ENCODE measurements at regions of chr5 and their contacts with region 1.

Region 1: DNA sequence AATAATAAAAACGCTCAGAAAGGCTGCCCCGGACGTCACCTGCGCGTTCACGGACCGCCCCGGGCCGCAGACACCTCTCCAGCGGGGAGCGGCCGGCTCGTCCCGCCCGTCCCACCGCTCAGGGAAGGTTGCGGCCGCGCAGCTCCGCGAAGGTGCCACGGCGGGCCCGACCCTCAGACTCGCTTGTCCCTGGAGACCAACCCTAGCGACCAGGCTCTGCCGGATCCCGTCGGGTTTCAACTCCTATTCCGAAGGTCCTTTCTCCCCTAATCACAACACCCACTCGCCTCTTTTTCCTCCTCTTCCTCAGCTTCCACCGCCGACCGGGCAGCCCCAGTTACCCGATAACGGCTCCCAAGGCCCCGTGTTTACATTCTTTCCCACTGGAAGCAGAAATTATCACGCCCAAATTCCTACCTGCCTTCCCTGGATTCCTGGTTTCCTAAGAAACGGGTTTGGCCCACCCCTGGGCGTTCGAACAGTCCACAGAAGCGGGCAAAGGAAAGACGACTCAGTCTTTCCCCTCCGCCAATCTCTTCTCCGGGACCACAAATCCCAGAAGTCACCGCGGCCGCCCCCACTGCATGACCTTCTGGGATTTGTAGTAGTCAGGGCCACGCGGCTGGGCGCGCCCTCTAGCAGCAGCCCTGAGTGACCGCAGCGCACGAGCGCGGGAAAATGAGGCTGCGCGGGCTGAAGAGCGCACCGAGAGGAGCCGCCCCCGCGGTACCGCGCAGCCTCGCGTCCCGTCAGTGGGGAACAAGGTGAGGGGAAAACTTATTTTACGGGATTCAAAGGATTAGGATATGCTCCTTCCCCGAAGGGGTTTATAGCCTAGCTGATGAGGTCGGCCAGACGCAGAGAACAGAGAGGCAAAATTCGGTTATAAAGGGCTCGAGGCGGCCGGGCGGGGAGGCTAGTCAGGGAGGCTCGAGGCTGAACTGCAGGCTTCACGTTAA is at the start of gene TTC33:
- DNase-seq: peak; percentile 93
- H3K4me3 Mint-ChIP-seq: peak within 1 kb of the TSS; percentile 41
- H3K27ac Mint-ChIP-seq: no peak within 1 kb of the TSS
- H3K4me1 Mint-ChIP-seq: peaks cover 5% of the 10 kb centered on the region
- H3K27me3 Mint-ChIP-seq: no peaks in the 10 kb centered on the region
- total RNA-seq, gene TTC33: 29.0 and 29.3 TPM in 2 replicates

Region 2: GRCh38 chr5:39074016-39074886 is 1681.4 kb before region 1 on chr5 and contains the start of gene RICTOR:
- intact Hi-C with region 1: loop called (anchors 10 kb)
- DNase-seq: peak; percentile 87
- H3K4me3 Mint-ChIP-seq: peak within 1 kb of the TSS; percentile 95
- H3K27ac Mint-ChIP-seq: peak within 1 kb of the TSS; percentile 97
- H3K4me1 Mint-ChIP-seq: peaks cover 46% of the 10 kb centered on the region
- H3K27me3 Mint-ChIP-seq: peaks cover 12% of the 10 kb centered on the region
- total RNA-seq, gene RICTOR: 28.2 and 29.8 TPM in 2 replicates

Region 3: DNA sequence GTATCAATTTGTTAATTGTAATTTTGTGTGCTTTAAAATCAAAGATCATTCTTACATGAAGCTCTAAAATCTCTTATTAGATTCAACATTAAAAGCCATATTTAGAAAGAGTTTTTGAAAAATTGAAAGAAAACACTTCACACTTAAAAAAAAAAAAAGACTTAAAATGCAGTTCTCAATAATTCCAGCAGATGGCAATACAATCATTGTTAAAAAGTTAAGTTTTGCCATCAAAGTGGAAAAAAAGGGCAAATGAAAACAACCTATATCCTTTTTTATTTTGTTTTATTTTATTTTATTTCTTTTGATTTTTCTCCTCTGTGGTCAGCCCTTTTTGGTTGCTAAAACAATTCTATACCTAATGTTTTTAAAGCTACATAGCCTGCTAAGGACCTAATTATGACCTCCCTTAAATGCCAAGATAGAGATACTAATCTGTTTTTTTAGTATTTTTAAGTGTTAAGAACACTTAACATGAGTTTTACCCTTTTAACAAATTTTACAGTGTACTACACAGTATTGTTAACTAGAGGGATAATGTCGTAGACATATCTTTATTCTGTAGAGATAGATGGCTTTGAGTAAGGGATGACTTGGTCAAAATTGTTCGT is 1176.7 kb before region 1 on chr5:
- intact Hi-C with region 1: loop called (anchors 5 kb)
- DNase-seq: no peak
- H3K4me3 Mint-ChIP-seq: no peak overlapping the region
- H3K27ac Mint-ChIP-seq: no peak overlapping the region
- H3K4me1 Mint-ChIP-seq: peaks cover 2% of the 10 kb centered on the region
- H3K27me3 Mint-ChIP-seq: peaks cover 20% of the 10 kb centered on the region

Region 4: GRCh38 chr5:40277161-40277906 is 478.4 kb before region 1 on chr5:
- intact Hi-C with region 1: loop called (anchors 5 kb)
- DNase-seq: peak; percentile 22
- H3K4me3 Mint-ChIP-seq: peak overlapping the region; percentile 5
- H3K27ac Mint-ChIP-seq: peak overlapping the region; percentile 87
- H3K4me1 Mint-ChIP-seq: peaks cover 53% of the 10 kb centered on the region
- H3K27me3 Mint-ChIP-seq: no peaks in the 10 kb centered on the region

Region 5: GRCh38 chr5:40486437-40487275 is 269.0 kb before region 1 on chr5:
- intact Hi-C with region 1: loop called (anchors 5 kb)
- DNase-seq: peak; percentile 64
- H3K4me3 Mint-ChIP-seq: peak overlapping the region; percentile 19
- H3K27ac Mint-ChIP-seq: peak overlapping the region; percentile 75
- H3K4me1 Mint-ChIP-seq: peaks cover 78% of the 10 kb centered on the region
- H3K27me3 Mint-ChIP-seq: no peaks in the 10 kb centered on the region

Region 6: DNA sequence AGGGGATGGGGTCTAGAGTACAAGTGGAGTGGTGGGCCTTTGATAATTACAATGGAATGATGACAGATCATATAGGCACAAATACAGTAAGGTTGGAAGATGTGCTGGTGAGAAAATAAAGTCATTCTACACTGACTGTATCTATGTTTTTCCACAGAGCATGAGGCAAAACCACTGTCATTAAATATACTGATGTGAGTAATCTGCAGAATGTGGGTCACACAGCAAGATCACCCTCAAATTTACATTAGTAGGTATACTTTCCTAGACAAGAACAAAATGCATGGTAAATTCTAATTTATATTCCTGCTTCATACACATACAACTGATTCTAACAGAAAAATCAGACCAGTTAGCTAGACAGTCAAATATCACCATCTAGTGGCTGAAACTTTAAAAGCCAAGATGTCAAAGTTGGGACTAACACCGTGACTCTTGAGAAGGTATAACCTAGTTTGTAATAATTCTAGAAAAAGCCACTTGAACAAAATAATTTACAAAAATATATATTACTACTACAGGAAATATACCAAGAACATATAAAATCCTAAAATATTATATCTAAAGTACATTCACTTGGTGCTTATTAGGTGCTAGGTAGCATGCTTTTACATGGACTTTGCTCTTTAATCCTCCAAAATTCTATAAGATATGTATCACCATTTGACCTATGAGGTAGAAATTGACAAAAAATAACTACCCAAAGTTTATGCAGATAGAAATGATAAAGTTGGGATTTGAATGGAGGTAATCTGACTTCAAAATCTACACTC is 19.4 kb before region 1 on chr5:
- intact Hi-C with region 1: loop called (anchors 1 kb)
- DNase-seq: no peak
- H3K4me3 Mint-ChIP-seq: no peak overlapping the region
- H3K27ac Mint-ChIP-seq: peak overlapping the region; percentile 17
- H3K4me1 Mint-ChIP-seq: peaks cover 28% of the 10 kb centered on the region
- H3K27me3 Mint-ChIP-seq: no peaks in the 10 kb centered on the region

Region 7: GRCh38 chr5:40834849-40835787 is 79.4 kb after region 1 on chr5 and contains the start of gene RPL37:
- intact Hi-C with region 1: loop called (anchors 1 kb)
- DNase-seq: peak; percentile 91
- H3K4me3 Mint-ChIP-seq: peak within 1 kb of the TSS; percentile 99
- H3K27ac Mint-ChIP-seq: peak within 1 kb of the TSS; percentile 98
- H3K4me1 Mint-ChIP-seq: peaks cover 47% of the 10 kb centered on the region
- H3K27me3 Mint-ChIP-seq: no peaks in the 10 kb centered on the region
- total RNA-seq, gene RPL37: 1,583 and 1,632 TPM in 2 replicates

Measured in activated T-helper 2 cell treated with anti-CD3 and anti-CD28 coated beads, Interferon-gamma antibody, Interleukin-2, Interleukin-4, amounts not matched to agents 10 μg/mL and 5 μg/mL and 100 μg/mL, durations not matched to agents 14 hours and 24 hours and 36 hours (primary cell).